K562 (cell line): ENCODE measurements at regions of chr7 and their contacts with region 1.

Region 1: DNA sequence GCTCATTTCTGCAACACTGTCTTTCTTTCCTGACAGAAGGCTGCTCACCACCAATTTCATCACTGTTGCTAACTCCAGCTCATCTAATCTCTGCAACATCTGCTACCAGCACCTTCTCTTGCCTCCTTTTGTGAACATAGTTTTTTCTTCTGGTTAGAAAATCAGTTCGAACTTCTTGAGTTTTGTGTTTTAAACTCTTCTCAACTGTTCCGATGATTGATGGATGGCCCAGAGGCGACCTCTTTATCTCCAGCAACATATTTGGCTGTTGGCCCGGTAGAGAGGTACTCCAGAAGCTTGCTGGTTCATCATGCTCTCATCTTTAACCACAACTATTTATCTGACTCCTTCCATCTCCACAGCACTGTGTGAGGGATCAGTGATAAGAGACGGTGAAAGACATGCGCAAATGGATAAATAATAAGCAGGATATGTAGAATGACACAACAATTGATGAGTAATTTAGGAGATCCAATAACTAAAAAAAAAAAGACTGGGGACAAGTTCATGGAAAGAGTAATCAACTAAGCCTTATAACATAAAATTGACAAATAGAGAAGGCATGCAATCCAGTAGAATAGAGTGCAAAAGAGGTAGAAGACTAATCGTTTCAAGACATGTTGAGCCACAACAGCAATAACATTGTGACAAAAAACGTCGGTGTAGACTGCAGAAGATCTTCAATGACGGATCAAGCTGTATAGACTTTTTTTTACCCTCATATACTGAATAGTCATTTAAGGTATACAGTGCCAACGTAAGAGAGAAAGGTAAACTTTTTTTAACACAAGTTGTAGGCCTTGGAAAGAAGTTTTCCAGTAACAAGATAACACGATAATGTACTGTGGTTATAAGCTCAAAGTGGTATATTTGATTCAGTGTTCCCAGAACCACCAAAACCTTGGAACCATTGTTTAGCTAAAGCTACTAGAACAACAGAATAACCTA is 152.2 kb downstream of the CRPPA start:
- DNase-seq: peak; percentile 88 to 98 (median 90)
- ATAC-seq: peak; percentile 66
- H3K4me3 ChIP-seq: no peak overlapping the region; the same call in 1 of the 2 replicates
- H3K27ac ChIP-seq: peak overlapping the region; percentile 94
- H3K4me1 ChIP-seq: peaks cover 10 to 30% of the 10 kb centered on the region in 2 experiments; a peak in 4 of 5 replicates
- H3K27me3 ChIP-seq: no peaks in the 10 kb centered on the region
- CTCF ChIP-seq: no peak
- EP300 ChIP-seq: peak; percentile 100
- POLR2A ChIP-seq: peak; percentile 76; the same call in 1 of the 2 replicates
- RAD21 ChIP-seq: peak in 1 of 2 experiments; percentile 42

Region 2: GRCh38 chr7:16078076-16078952 is 190.8 kb before region 1 on chr7:
- CTCF ChIA-PET with region 1: no interaction called
- POLR2A ChIA-PET with region 1: no interaction called
- in situ Hi-C with region 1: no loop called
- intact Hi-C with region 1: loop called (anchors 2 kb)
- DNase-seq: peak; percentile 35 to 83 (median 40)
- ATAC-seq: peak; percentile 94
- H3K4me3 ChIP-seq: no peak overlapping the region
- H3K27ac ChIP-seq: no peak overlapping the region
- H3K4me1 ChIP-seq: no peaks in the 10 kb centered on the region; a peak in 1 of 5 replicates
- H3K27me3 ChIP-seq: no peaks in the 10 kb centered on the region
- CTCF ChIP-seq: peak; percentile 60 to 77 (median 74); a peak in 5 of 6 replicates
- EP300 ChIP-seq: no peak
- POLR2A ChIP-seq: no peak
- RAD21 ChIP-seq: peak; percentile 92 to 95

Region 3: GRCh38 chr7:16114633-16115032 is 154.5 kb before region 1 on chr7:
- CTCF ChIA-PET with region 1: no interaction called
- POLR2A ChIA-PET with region 1: no interaction called
- in situ Hi-C with region 1: no loop called
- intact Hi-C with region 1: loop called (anchors 2 kb)
- DNase-seq: peak in 2 of 4 experiments; percentile 23 to 58
- ATAC-seq: peak; percentile 83
- H3K4me3 ChIP-seq: no peak overlapping the region
- H3K27ac ChIP-seq: no peak overlapping the region; the same call in 2 of the 3 replicates
- H3K4me1 ChIP-seq: no peaks in the 10 kb centered on the region
- H3K27me3 ChIP-seq: no peaks in the 10 kb centered on the region
- CTCF ChIP-seq: peak in 2 of 3 experiments; percentile 42 to 60; a peak in 3 of 6 replicates
- EP300 ChIP-seq: no peak
- POLR2A ChIP-seq: no peak
- RAD21 ChIP-seq: peak; percentile 51 to 78

Region 4: DNA sequence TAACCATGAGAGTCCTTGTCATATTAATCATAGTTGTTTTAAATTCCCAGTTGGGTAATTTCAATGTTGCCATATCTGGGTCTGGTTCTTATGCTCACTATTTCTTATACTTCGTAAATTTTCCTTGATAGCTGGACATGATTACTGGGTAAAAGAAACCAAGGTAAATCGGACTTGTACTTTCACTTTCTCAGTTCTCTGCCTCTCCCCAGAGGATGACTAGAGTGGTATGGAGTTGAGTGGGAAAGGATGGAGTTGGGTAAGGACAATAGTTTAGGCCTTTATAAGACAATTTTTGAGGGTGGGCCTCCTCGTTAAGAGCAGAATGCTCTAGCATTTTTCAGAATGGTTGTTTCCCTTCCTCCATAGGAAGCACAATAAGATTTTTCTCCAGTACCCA is 46.2 kb after region 1 on chr7:
- CTCF ChIA-PET with region 1: no interaction called
- POLR2A ChIA-PET with region 1: no interaction called
- in situ Hi-C with region 1: no loop called
- intact Hi-C with region 1: no loop called
- DNase-seq: no peak
- ATAC-seq: peak; percentile 63
- H3K4me3 ChIP-seq: no peak overlapping the region
- H3K27ac ChIP-seq: no peak overlapping the region
- H3K4me1 ChIP-seq: no peaks in the 10 kb centered on the region
- H3K27me3 ChIP-seq: no peaks in the 10 kb centered on the region
- CTCF ChIP-seq: no peak
- EP300 ChIP-seq: no peak
- POLR2A ChIP-seq: no peak
- RAD21 ChIP-seq: no peak

Region 5: DNA sequence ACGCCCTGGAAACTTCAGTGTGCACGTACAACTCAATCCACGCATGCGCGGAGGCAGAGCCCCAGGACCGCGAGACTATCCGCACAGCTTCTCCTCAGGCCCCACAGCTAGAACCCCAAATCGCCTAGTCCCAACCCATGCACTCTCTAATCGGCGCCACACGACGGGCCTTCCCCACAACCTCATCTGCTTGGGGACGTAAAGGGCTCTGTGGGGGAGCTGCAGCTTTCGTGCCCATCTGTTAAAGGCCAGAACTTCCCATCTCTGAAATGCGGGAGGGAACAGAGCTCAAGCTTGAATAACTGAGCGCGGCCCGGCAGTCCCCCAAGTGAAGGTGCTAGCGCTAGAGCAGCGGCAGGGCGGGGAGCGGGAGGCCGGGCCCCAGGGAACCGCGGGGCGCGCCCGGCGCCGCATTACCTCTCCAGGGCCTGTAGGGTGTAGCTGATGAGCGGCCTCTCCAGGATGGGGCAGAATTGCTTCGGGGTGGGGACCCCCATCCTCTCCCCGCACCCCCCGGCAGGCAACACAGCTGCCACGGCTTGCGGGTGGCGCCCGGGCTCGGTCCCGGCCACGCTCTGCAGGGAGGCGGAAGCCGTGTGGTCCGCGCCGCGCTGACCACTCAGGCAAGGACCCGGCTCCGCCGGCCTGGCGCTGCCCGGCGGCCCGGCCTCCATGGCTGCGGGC is 151.7 kb after region 1 on chr7:
- CTCF ChIA-PET with region 1: no interaction called
- POLR2A ChIA-PET with region 1: interaction called, 4 read pairs
- in situ Hi-C with region 1: loop called (anchors 5 kb)
- intact Hi-C with region 1: loop called (anchors 1 kb)
- DNase-seq: peak; percentile 85 to 97 (median 90)
- ATAC-seq: peak; percentile 87
- H3K4me3 ChIP-seq: peak overlapping the region; percentile 66
- H3K27ac ChIP-seq: peak overlapping the region; percentile 97
- H3K4me1 ChIP-seq: peaks cover 23 to 46% of the 10 kb centered on the region in 2 experiments
- H3K27me3 ChIP-seq: no peaks in the 10 kb centered on the region
- CTCF ChIP-seq: peak; percentile 29 to 73 (median 36); a peak in 5 of 6 replicates
- EP300 ChIP-seq: no peak
- POLR2A ChIP-seq: peak; percentile 96
- RAD21 ChIP-seq: peak; percentile 30 to 32; a peak in 3 of 4 replicates

Region 6: GRCh38 chr7:16564909-16565426 is 295.9 kb after region 1 on chr7:
- CTCF ChIA-PET with region 1: no interaction called
- POLR2A ChIA-PET with region 1: interaction called, 3 read pairs
- in situ Hi-C with region 1: loop called (anchors 10 kb)
- intact Hi-C with region 1: loop called (anchors 2 kb)
- DNase-seq: peak; percentile 47 to 71 (median 58)
- ATAC-seq: peak; percentile 84
- H3K4me3 ChIP-seq: no peak overlapping the region
- H3K27ac ChIP-seq: no peak overlapping the region
- H3K4me1 ChIP-seq: no peaks in the 10 kb centered on the region; a peak in 2 of 5 replicates
- H3K27me3 ChIP-seq: no peaks in the 10 kb centered on the region
- CTCF ChIP-seq: peak; percentile 62 to 86 (median 68); a peak in 5 of 6 replicates
- EP300 ChIP-seq: no peak
- POLR2A ChIP-seq: no peak
- RAD21 ChIP-seq: peak; percentile 94 to 98

Region 7: GRCh38 chr7:16753102-16753931 is 484.2 kb after region 1 on chr7 and contains the start of gene TSPAN13:
- CTCF ChIA-PET with region 1: no interaction called
- POLR2A ChIA-PET with region 1: no interaction called
- in situ Hi-C with region 1: no loop called
- intact Hi-C with region 1: loop called (anchors 10 kb)
- DNase-seq: peak; percentile 93 to 96 (median 94)
- ATAC-seq: peak; percentile 93
- H3K4me3 ChIP-seq: peak within 1 kb of the TSS; percentile 72
- H3K27ac ChIP-seq: peak within 1 kb of the TSS; percentile 63
- H3K4me1 ChIP-seq: peaks cover 9 to 11% of the 10 kb centered on the region in 2 experiments; a peak in 4 of 5 replicates
- H3K27me3 ChIP-seq: no peaks in the 10 kb centered on the region
- CTCF ChIP-seq: no peak
- EP300 ChIP-seq: no peak
- POLR2A ChIP-seq: peak; percentile 51; the same call in 1 of the 2 replicates
- RAD21 ChIP-seq: no peak; a peak in 1 of 4 replicates
- polyA plus RNA-seq, gene TSPAN13: 7.8 to 9.8 TPM